A549 (cell line): ENCODE measurements at regions of chr19 and their contacts with region 1.

Region 1: GRCh38 chr19:18985257-18985656 is 44.2 kb upstream of the HOMER3 start:
- DNase-seq: no peak
- ATAC-seq: no peak
- H3K4me3 ChIP-seq: no peak overlapping the region
- H3K27ac ChIP-seq: no peak overlapping the region
- H3K4me1 ChIP-seq: no peaks in the 10 kb centered on the region
- CTCF ChIP-seq: no peak
- EP300 ChIP-seq: no peak
- POLR2A ChIP-seq: no peak
- RAD21 ChIP-seq: no peak

Region 2: GRCh38 chr19:18919086-18919899 is 66.0 kb before region 1 on chr19 and contains the starts of genes COPE and DDX49:
- CTCF ChIA-PET with region 1: interaction called, 28 read pairs
- POLR2A ChIA-PET with region 1: interaction called, 5 read pairs
- DNase-seq: peak; percentile 97 to 99
- ATAC-seq: peak; percentile 97
- H3K4me3 ChIP-seq: peak within 1 kb of the TSS; percentile 91
- H3K27ac ChIP-seq: peak within 1 kb of the TSS; percentile 81 to 95
- H3K4me1 ChIP-seq: peaks cover 8% of the 10 kb centered on the region; the same call in 1 of the 3 replicates
- CTCF ChIP-seq: no peak
- EP300 ChIP-seq: no peak
- POLR2A ChIP-seq: peak; percentile 59
- RAD21 ChIP-seq: no peak
- polyA plus RNA-seq, gene COPE: 91.8 and 94.0 TPM in 2 replicates
- polyA plus RNA-seq, gene DDX49: 23.2 and 23.4 TPM in 2 replicates

Region 3: GRCh38 chr19:18940769-18941407 is 44.4 kb before region 1 on chr19 and contains the start of gene HOMER3:
- CTCF ChIA-PET with region 1: interaction called, 22 read pairs
- POLR2A ChIA-PET with region 1: no interaction called
- DNase-seq: peak; percentile 36 to 79
- ATAC-seq: peak; percentile 73 to 79
- H3K4me3 ChIP-seq: peak within 1 kb of the TSS; percentile 94
- H3K27ac ChIP-seq: peak within 1 kb of the TSS; percentile 92 to 99
- H3K4me1 ChIP-seq: peaks cover 8% of the 10 kb centered on the region; the same call in 1 of the 3 replicates
- CTCF ChIP-seq: peak; percentile 53
- EP300 ChIP-seq: no peak
- POLR2A ChIP-seq: no peak; the same call in 1 of the 2 replicates
- RAD21 ChIP-seq: peak in 1 of 2 experiments; percentile 38; a peak in 2 of 5 replicates
- polyA plus RNA-seq, gene HOMER3: 9.9 and 11.4 TPM in 2 replicates

Region 4: GRCh38 chr19:18967358-18968146 is 17.7 kb before region 1 on chr19:
- CTCF ChIA-PET with region 1: interaction called, 13 read pairs
- POLR2A ChIA-PET with region 1: no interaction called
- DNase-seq: peak in 1 of 2 experiments; percentile 16
- ATAC-seq: peak in 1 of 2 experiments; percentile 52; a peak in 2 of 6 replicates
- H3K4me3 ChIP-seq: no peak overlapping the region
- H3K27ac ChIP-seq: peak overlapping the region; percentile 42 to 87; a peak in 5 of 6 replicates
- H3K4me1 ChIP-seq: peaks cover 28% of the 10 kb centered on the region
- CTCF ChIP-seq: no peak
- EP300 ChIP-seq: no peak
- POLR2A ChIP-seq: no peak
- RAD21 ChIP-seq: no peak

Region 5: DNA sequence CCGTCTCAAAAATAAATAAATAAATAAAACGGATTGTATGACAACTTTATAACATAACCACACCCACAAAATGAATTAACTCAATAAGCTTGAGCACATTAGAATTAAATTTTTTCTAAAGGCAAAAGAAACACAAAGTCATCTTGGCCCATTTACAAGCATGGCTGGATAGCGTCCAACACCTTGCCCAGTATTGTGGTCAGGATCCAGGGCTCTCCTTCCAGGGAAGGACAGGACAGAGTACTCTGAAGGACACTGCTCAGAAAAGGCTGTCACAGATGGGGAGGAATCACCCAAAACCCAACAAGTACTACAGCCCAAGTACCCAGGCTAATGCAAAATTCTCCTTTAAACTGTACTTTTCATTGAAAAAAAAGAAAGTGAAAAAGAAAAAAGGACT is 21.0 kb after region 1 on chr19:
- CTCF ChIA-PET with region 1: interaction called, 44 read pairs
- POLR2A ChIA-PET with region 1: no interaction called
- DNase-seq: no peak
- ATAC-seq: no peak
- H3K4me3 ChIP-seq: no peak overlapping the region
- H3K27ac ChIP-seq: no peak overlapping the region
- H3K4me1 ChIP-seq: no peaks in the 10 kb centered on the region
- CTCF ChIP-seq: no peak
- EP300 ChIP-seq: no peak
- POLR2A ChIP-seq: no peak
- RAD21 ChIP-seq: no peak